Heart right ventricle (tissue), 16 donors: ENCODE measurements at regions of chr14 and their contacts with region 1.

Region 1: GRCh38 chr14:68795597-68796417 is 2.9 kb upstream of the ZFP36L1 start:
- DNase-seq: peak; percentile 89 to 92
- ATAC-seq: peak; percentile 39 to 79 (median 48)
- H3K4me3 ChIP-seq: peak overlapping the region; percentile 60 to 93 (median 87)
- H3K27ac ChIP-seq: peak overlapping the region; percentile 99 to 100 (median 100)
- H3K4me1 ChIP-seq: peaks cover 0 to 36% (median 9%) of the 10 kb centered on the region in 9 donors
- H3K27me3 ChIP-seq: no peaks in the 10 kb centered on the region
- CTCF ChIP-seq: peak; percentile 66 to 87 (median 79)

Region 2: DNA sequence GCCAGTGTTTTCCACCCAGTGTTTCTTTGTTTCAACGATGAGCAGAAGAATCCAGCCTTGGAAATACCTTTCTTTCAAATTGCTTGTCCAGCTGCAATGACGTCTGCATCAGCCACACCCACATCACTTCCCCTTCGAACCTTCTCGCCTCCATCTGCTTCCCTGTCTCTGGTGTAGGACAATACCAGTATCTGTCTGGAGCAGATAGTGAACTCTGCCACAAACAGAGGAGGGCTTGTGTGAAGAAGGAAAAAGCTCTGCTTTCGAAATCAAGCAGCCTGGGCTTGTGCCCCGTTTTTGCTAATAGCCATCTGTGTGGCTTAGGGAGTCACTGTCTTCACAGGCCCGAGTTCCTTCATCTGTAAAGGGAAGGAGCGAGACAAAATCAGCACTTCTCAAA is 418.3 kb before region 1 on chr14:
- intact Hi-C with region 1: loop called in 1 of 10 experiments (anchors 5 kb)
- DNase-seq: peak; percentile 54 to 77
- ATAC-seq: peak; percentile 84 to 95 (median 90)
- H3K4me3 ChIP-seq: peak overlapping the region in 1 of 10 donors; percentile 2
- H3K27ac ChIP-seq: peak overlapping the region; percentile 54 to 89 (median 80)
- H3K4me1 ChIP-seq: peaks cover 4 to 76% (median 38%) of the 10 kb centered on the region in 9 donors
- H3K27me3 ChIP-seq: no peaks in the 10 kb centered on the region
- CTCF ChIP-seq: no peak

Region 3: GRCh38 chr14:68520637-68521556 is 274.9 kb before region 1 on chr14:
- intact Hi-C with region 1: loop called in 3 of 10 experiments (anchors 5 kb)
- DNase-seq: no peak
- ATAC-seq: peak in 2 of 8 donors; percentile 25 to 48
- H3K4me3 ChIP-seq: no peak overlapping the region
- H3K27ac ChIP-seq: peak overlapping the region in 7 of 10 donors; percentile 33 to 73 (median 67)
- H3K4me1 ChIP-seq: peaks cover 0 to 79% (median 58%) of the 10 kb centered on the region in 9 donors
- H3K27me3 ChIP-seq: no peaks in the 10 kb centered on the region
- CTCF ChIP-seq: no peak

Region 4: GRCh38 chr14:68621400-68622365 is 174.1 kb before region 1 on chr14:
- intact Hi-C with region 1: loop called in 1 of 10 experiments (anchors 5 kb)
- DNase-seq: peak; percentile 58 to 76
- ATAC-seq: peak in 7 of 8 donors; percentile 54 to 85 (median 74)
- H3K4me3 ChIP-seq: no peak overlapping the region
- H3K27ac ChIP-seq: peak overlapping the region in 9 of 10 donors; percentile 49 to 92 (median 74)
- H3K4me1 ChIP-seq: peaks cover 9 to 45% (median 29%) of the 10 kb centered on the region in 9 donors
- H3K27me3 ChIP-seq: no peaks in the 10 kb centered on the region
- CTCF ChIP-seq: no peak

Region 5: DNA sequence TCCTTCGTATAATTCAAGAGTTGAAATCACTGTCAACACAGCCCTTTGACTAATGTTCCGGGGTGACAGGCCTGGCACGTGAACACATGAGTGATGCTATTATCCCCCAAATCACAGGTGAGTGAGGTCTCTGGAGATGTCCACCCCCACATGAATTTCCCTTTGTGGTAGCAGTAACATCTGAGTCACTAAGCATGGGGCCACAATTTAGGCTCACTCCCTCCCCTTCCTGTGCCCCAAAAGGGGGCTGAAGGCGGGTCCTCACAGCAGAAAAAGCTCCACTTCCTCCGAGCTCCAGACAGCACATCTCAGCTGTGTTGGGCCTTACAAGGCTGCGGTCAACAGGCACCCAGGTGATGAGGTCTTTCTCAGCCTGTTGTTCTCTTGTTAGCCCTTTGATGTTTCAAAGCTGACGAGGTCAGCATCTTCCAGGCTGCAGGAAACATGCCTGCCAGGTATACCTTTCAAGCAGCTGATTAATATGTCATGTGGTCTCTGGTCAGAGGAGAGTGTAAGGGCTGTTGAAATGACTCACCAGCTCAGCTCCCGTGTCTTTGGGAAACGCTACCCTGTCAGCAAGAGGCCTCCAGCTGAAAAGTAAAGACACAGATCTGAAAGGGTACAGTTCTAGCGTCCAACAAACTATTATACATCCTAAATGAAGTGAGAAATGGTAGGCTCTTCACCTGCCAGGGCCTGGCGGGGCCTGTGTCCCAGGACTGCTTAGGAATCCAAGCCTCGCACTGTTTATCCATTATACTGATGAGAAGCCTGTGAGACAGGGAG is 110.2 kb before region 1 on chr14:
- intact Hi-C with region 1: loop called in 3 of 10 experiments (anchors 2 to 5 kb)
- DNase-seq: no peak
- ATAC-seq: no peak
- H3K4me3 ChIP-seq: no peak overlapping the region
- H3K27ac ChIP-seq: peak overlapping the region in 5 of 10 donors; percentile 25 to 96 (median 85)
- H3K4me1 ChIP-seq: peaks cover 23 to 69% (median 47%) of the 10 kb centered on the region in 9 donors
- H3K27me3 ChIP-seq: no peaks in the 10 kb centered on the region
- CTCF ChIP-seq: no peak

Region 6: GRCh38 chr14:68816262-68816942 is 20.6 kb after region 1 on chr14:
- intact Hi-C with region 1: loop called in 3 of 10 experiments (anchors 1 to 2 kb)
- DNase-seq: peak; percentile 89 to 92
- ATAC-seq: peak; percentile 90 to 96 (median 92)
- H3K4me3 ChIP-seq: peak overlapping the region; percentile 22 to 68 (median 57)
- H3K27ac ChIP-seq: peak overlapping the region; percentile 98 to 100 (median 99)
- H3K4me1 ChIP-seq: peaks cover 6 to 64% (median 42%) of the 10 kb centered on the region in 9 donors
- H3K27me3 ChIP-seq: no peaks in the 10 kb centered on the region
- CTCF ChIP-seq: peak; percentile 95 to 99 (median 98)

Region 7: GRCh38 chr14:68884031-68885030 is 88.5 kb after region 1 on chr14:
- intact Hi-C with region 1: no loop called
- DNase-seq: peak; percentile 36 to 65
- ATAC-seq: peak; percentile 16 to 90 (median 78)
- H3K4me3 ChIP-seq: no peak overlapping the region
- H3K27ac ChIP-seq: peak overlapping the region in 8 of 10 donors; percentile 38 to 62 (median 50)
- H3K4me1 ChIP-seq: peaks cover 0 to 35% (median 11%) of the 10 kb centered on the region in 9 donors
- H3K27me3 ChIP-seq: no peaks in the 10 kb centered on the region
- CTCF ChIP-seq: no peak